ENCODE measurements at regions of chr2 and their contacts with region 1.

Region 1: GRCh38 chr2:237026981-237027711 is 58.5 kb upstream of the COPS8 start:
- DNase-seq: peak; percentile 87
- ATAC-seq: peak; percentile 94

Region 2: GRCh38 chr2:236352761-236353593 is 674.2 kb before region 1 on chr2:
- intact Hi-C with region 1: loop called (anchors 2 kb)
- DNase-seq: no peak
- ATAC-seq: peak; percentile 53